Naive thymus-derived CD4-positive, alpha-beta T cell (primary cell): ENCODE measurements at regions of chrX and their contacts with region 1.

Region 1: DNA sequence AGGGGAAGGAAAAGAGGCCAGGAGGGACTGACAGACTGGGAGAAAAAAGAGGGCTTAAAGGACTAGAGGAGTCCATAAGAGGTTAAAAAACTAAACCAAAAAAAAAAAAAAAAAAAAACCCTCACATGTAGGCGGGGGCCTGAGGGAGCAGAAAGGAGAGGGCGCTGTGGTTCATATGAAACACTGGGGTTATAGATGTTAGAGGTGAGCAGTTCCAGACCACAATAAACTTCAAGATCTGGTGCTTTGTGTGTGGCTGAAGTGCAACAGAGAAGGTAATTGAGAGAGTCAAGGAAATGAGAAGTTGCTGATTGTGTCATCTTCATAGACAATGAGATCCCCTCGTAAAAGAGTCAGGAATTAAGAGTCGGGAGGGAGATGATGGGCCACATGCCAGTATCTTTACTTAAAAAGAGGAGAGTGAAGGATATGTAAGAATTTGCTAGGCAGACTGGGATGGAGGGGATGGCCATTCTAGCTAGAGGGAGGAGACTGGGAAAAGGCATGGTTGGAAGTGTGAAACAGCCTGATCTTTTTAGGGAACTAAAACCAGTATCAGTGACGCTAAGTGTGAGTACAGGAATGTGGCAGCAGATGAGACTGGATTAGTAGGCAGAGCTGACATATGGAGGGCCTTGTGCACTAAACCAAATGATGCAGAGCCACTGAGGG is 18.4 kb upstream of the OGT start:
- DNase-seq: peak in 7 of 9 donors; percentile 28 to 57 (median 36)
- ATAC-seq: peak; percentile 91
- H3K4me3 ChIP-seq: no peak overlapping the region
- H3K4me3 Mint-ChIP-seq: peak overlapping the region in 2 of 10 donors; percentile 24 to 26
- H3K27ac ChIP-seq: no peak overlapping the region
- H3K27ac Mint-ChIP-seq: peak overlapping the region in 6 of 9 donors; percentile 17 to 76 (median 34)
- H3K4me1 ChIP-seq: peaks cover 3 to 6% of the 10 kb centered on the region in 2 donors
- H3K4me1 Mint-ChIP-seq: peaks cover 5 to 18% (median 10%) of the 10 kb centered on the region in 7 donors
- H3K27me3 ChIP-seq: no peaks in the 10 kb centered on the region
- H3K27me3 Mint-ChIP-seq: peaks cover 0 to 2% (median 0%) of the 10 kb centered on the region in 5 donors

Region 2: GRCh38 chrX:71492231-71493065 is 22.1 kb before region 1 on chrX:
- CTCF ChIA-PET with region 1: interaction called, 4 read pairs
- POLR2A ChIA-PET with region 1: no interaction called
- intact Hi-C with region 1: loop called in 1 of 2 experiments (anchors 2 kb)
- DNase-seq: peak; percentile 16 to 53 (median 43)
- ATAC-seq: peak; percentile 86
- H3K4me3 ChIP-seq: peak overlapping the region; percentile 68
- H3K4me3 Mint-ChIP-seq: peak overlapping the region; percentile 79 to 88 (median 84)
- H3K27ac ChIP-seq: peak overlapping the region; percentile 55
- H3K27ac Mint-ChIP-seq: peak overlapping the region in 8 of 9 donors; percentile 43 to 81 (median 56)
- H3K4me1 ChIP-seq: no peaks in the 10 kb centered on the region
- H3K4me1 Mint-ChIP-seq: peaks cover 4 to 17% (median 11%) of the 10 kb centered on the region in 7 donors
- H3K27me3 ChIP-seq: no peaks in the 10 kb centered on the region
- H3K27me3 Mint-ChIP-seq: peaks cover 0 to 2% (median 0%) of the 10 kb centered on the region in 5 donors